Posterior cingulate gyrus (tissue), 11 donors: ENCODE measurements at regions of chr13 and their contacts with region 1.

Region 1: DNA sequence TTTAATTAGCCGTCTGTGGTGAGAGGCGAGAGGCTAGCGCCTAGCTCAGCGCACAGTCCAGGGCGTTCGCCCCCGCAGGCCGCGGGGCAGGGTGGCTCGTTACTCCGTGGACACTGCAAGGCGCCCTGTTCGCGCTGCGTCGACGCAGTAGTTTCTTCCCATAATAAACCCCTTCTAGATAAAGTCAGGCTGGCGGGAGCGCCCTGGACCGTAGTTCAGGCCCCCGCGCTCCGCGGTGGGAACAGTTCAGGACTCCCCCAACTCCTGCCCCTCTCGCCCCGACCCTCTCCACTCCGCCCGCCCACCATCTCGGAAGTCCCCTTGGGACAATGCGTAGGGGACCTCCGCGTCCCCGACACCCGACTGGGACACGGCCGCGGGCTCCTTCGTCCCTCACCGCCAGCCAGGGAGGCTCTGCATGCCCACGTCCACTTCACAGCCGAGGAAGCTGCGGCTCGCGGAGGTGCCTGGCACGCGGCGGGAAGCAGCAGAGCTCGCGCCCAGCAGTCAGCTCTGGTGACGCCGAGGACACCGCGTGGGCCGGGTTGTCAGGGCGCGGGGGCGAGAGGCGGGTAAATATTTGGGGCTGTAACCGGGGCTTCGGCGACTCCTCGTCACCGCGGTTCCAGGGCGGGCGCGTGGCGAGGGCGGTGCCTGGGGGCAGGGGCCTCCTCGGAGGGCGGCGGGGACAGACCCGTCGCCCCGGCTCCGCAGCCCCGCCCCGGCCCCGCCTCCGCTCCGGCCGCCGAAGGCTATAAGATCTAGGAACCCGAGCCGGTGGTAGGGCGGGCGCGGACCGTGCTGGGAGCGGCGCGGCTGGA is at the start of gene RGCC:
- DNase-seq: peak; percentile 74 to 97 (median 80)

Region 2: GRCh38 chr13:41546372-41547190 is 89.6 kb after region 1 on chr13:
- intact Hi-C with region 1: loop called (anchors 2 kb)
- DNase-seq: peak in 2 of 10 donors; percentile 43 to 85

Region 3: DNA sequence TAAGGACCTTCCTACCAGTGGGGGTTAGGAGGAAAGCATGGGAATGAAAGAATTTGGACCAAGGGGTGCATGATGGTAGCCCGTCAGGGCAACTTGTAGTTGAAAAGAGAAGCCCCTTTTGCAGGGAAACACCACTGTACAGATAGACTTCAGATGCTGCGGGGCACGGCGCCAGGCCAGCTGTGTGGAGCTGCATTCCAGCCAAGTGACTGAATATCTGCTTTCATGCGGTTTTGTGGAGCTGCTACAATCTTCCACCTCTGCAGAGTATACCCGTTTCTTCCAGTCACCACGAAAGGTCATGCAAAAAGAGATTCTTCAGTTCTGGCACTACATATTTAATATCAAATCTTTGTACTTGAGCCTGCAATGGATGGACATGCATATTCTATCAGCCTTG is 105.1 kb after region 1 on chr13:
- intact Hi-C with region 1: loop called (anchors 5 kb)
- DNase-seq: peak; percentile 81 to 99 (median 89)

Region 4: DNA sequence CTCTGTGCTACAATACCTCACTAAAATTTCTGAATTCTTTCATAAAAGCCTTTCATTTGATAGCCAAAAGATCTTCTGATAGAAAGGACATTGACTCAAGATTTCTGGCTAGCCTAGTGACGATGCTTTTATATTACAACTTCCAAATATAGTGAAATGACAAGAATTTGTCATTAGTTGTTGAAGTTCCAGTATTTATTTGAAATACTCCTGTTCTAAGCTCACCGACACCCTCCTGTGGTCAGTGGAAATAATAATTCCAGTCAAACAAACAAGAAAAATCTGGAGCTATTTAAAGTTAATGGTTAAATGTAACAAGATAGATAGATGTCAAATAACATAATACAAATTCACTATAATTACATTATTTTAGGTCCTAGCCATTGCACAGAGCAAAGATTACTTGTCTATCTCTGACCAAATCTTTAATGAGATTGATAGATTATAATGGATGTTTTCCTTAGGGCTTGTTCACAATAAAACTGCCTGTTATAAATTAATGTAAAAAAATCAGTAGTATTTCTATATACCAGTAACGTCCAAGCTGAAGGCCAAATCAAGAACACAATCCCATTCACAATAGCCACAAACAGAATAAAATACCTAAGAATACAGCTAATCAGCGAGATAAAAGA is 195.9 kb after region 1 on chr13:
- intact Hi-C with region 1: loop called (anchors 2 kb)
- DNase-seq: peak in 1 of 10 donors; percentile 50

Region 5: DNA sequence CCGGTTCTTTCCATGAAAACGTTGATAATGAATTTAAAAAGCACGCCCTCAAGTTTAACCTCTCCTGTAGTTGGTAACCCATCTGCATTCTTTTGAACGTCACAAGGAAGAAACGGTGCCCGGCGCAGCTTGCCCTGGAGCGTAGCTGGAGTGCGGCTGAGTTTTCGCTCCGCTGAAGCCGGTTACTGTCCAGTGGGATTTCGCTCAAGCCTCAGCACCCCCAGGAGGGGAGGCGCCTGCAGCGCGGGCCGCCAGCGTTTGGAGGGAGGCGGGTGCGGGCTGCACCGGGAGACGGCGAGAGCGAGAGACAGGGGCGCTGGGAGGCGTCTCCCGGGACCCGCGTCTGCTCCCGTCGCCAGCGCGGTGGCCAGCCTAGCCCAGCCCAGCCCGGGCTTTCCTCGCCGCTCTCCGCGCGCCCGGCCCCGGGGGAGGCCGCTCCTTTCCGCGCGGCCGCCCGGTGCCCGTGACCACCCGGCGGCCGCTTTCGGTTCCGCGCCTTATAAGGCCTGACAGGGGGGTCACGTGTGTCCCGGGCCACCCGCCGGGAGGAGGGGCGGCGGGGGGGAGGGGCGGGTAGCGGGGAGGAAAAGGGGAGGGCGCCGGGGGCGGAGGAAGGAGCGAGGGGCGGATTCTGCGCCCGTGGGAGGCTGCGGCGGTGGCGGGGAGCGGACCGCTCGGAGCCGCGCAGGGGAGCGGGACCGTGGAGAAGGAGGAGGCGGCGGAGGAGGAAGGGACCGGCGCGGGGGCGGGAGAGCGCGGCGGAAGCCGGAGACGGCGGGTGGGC is 583.2 kb after region 1 on chr13:
- intact Hi-C with region 1: loop called (anchors 10 kb)
- DNase-seq: peak; percentile 75 to 97 (median 84)